B cell (primary cell): ENCODE measurements at regions of chr2 and their contacts with region 1.

Region 1: GRCh38 chr2:70248181-70248847 is at the start of gene TIA1:
- DNase-seq: peak; percentile 99
- ATAC-seq: peak; percentile 96
- H3K4me3 ChIP-seq: peak within 1 kb of the TSS; percentile 70 to 98 (median 95)
- H3K4me3 Mint-ChIP-seq: peak within 1 kb of the TSS; percentile 98
- H3K27ac ChIP-seq: peak within 1 kb of the TSS; percentile 86 to 94
- H3K27ac Mint-ChIP-seq: peak within 1 kb of the TSS; percentile 98
- H3K4me1 ChIP-seq: peaks cover 24 to 29% of the 10 kb centered on the region in 2 donors
- H3K4me1 Mint-ChIP-seq: peaks cover 35% of the 10 kb centered on the region
- H3K27me3 ChIP-seq: no peaks in the 10 kb centered on the region
- H3K27me3 Mint-ChIP-seq: no peaks in the 10 kb centered on the region
- CTCF ChIP-seq: no peak
- total RNA-seq, gene TIA1: 214 and 243 TPM in 2 replicates

Region 2: DNA sequence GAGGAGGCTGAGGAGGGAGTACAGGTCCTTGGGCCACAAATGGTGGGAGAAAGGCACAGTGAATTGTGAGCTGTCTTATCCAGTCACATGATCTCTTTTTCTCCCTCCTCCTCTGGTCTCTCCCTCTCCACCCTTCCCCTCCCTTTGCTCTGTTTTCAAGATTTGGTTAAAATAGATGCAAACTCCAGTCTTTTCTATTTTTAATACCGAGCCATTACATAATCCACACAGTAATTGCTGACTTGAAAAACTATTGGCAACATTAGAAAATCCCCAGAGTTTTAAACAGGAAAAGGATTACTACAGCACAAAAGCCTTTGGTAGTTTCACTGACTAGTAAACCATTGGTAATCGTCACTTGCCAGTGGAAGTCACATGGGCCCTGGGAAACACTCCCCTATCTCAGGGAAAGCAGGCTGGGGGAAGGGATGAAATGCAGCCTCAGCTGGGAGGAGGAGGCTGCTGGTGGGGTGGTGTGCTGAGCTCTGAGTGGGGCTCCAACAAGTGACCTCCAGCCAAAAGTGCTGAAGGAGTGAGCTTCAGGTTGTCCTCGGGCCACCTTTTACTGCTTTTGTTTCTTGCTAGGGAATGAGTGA is 218.4 kb before region 1 on chr2:
- CTCF ChIA-PET with region 1: no interaction called
- POLR2A ChIA-PET with region 1: no interaction called
- intact Hi-C with region 1: no loop called
- DNase-seq: no peak
- ATAC-seq: no peak
- H3K4me3 ChIP-seq: no peak overlapping the region
- H3K4me3 Mint-ChIP-seq: no peak overlapping the region
- H3K27ac ChIP-seq: no peak overlapping the region
- H3K27ac Mint-ChIP-seq: no peak overlapping the region
- H3K4me1 ChIP-seq: no peaks in the 10 kb centered on the region
- H3K4me1 Mint-ChIP-seq: no peaks in the 10 kb centered on the region
- H3K27me3 ChIP-seq: no peaks in the 10 kb centered on the region
- H3K27me3 Mint-ChIP-seq: no peaks in the 10 kb centered on the region
- CTCF ChIP-seq: no peak

Region 3: GRCh38 chr2:70226781-70227180 is 21.5 kb before region 1 on chr2:
- CTCF ChIA-PET with region 1: no interaction called
- POLR2A ChIA-PET with region 1: no interaction called
- intact Hi-C with region 1: no loop called
- DNase-seq: no peak
- ATAC-seq: no peak
- H3K4me3 ChIP-seq: no peak overlapping the region
- H3K4me3 Mint-ChIP-seq: no peak overlapping the region
- H3K27ac ChIP-seq: no peak overlapping the region
- H3K27ac Mint-ChIP-seq: no peak overlapping the region
- H3K4me1 ChIP-seq: no peaks in the 10 kb centered on the region
- H3K4me1 Mint-ChIP-seq: no peaks in the 10 kb centered on the region
- H3K27me3 ChIP-seq: no peaks in the 10 kb centered on the region
- H3K27me3 Mint-ChIP-seq: no peaks in the 10 kb centered on the region
- CTCF ChIP-seq: no peak

Region 4: DNA sequence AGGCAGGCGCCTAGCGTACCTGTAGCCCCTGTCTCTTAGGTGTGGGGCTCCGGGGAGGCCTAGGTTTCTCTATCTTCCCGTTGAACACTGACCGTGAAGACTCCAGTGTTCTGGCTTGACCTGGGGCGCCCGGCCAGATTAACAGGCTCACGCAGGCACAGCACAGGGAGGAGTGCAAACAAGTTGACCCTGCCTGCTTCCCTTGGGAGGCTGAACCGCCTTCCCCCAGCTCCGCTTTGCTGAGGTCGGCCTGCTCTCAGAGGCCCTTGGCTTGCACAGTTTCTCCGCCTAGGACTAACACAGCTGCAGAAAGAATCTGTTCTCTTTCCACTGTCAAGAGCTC is 10.2 kb after region 1 on chr2:
- CTCF ChIA-PET with region 1: interaction called, 10 read pairs
- POLR2A ChIA-PET with region 1: interaction called, 20 read pairs
- intact Hi-C with region 1: loop called (anchors 1 kb)
- DNase-seq: no peak
- ATAC-seq: no peak
- H3K4me3 ChIP-seq: peak overlapping the region in 4 of 5 experiments; percentile 54 to 81 (median 70)
- H3K4me3 Mint-ChIP-seq: peak overlapping the region; percentile 97
- H3K27ac ChIP-seq: peak overlapping the region in 1 of 2 donors; percentile 14
- H3K27ac Mint-ChIP-seq: peak overlapping the region; percentile 90
- H3K4me1 ChIP-seq: peaks cover 6 to 12% of the 10 kb centered on the region in 2 donors
- H3K4me1 Mint-ChIP-seq: peaks cover 18% of the 10 kb centered on the region
- H3K27me3 ChIP-seq: no peaks in the 10 kb centered on the region
- H3K27me3 Mint-ChIP-seq: no peaks in the 10 kb centered on the region
- CTCF ChIP-seq: no peak